ENCODE measurements at regions of chr3 and their contacts with region 1.

Region 1: GRCh38 chr3:194685718-194686555 is at the start of gene FAM43A:
- DNase-seq: peak; percentile 81 to 94
- H3K4me3 ChIP-seq: peak within 1 kb of the TSS; percentile 71
- H3K4me1 ChIP-seq: peaks cover 23% of the 10 kb centered on the region
- H3K27me3 ChIP-seq: no peaks in the 10 kb centered on the region

Region 2: DNA sequence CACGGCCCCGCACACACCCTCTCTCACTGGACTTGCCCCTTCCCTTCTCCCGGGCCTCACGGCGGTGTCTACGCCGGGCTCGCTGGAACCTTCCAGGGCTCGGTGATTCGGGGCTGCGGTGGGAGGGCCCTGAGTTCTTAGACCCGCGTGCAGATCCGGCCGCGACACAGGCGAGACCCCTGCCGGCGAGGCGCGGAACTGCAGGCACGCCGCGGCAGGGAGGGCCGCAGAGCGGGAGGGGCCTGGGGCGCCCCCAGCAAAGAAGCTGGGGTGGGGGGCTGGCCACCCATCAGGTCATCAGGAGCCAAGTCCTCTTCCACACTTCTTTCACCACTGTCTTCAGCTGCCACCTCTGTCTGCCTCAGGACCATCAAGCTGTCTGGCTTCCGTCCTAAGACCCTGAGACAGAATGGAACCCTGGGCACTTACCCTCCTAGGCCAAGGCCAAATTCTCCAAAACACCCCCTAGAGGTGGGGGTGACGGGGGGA is 420.5 kb after region 1 on chr3:
- in situ Hi-C with region 1: loop called (anchors 5 kb)
- DNase-seq: peak; percentile 43 to 79
- H3K4me3 ChIP-seq: no peak overlapping the region
- H3K4me1 ChIP-seq: no peaks in the 10 kb centered on the region
- H3K27me3 ChIP-seq: no peaks in the 10 kb centered on the region